K562 (cell line): ENCODE measurements at regions of chr21 and their contacts with region 1.

Region 1: DNA sequence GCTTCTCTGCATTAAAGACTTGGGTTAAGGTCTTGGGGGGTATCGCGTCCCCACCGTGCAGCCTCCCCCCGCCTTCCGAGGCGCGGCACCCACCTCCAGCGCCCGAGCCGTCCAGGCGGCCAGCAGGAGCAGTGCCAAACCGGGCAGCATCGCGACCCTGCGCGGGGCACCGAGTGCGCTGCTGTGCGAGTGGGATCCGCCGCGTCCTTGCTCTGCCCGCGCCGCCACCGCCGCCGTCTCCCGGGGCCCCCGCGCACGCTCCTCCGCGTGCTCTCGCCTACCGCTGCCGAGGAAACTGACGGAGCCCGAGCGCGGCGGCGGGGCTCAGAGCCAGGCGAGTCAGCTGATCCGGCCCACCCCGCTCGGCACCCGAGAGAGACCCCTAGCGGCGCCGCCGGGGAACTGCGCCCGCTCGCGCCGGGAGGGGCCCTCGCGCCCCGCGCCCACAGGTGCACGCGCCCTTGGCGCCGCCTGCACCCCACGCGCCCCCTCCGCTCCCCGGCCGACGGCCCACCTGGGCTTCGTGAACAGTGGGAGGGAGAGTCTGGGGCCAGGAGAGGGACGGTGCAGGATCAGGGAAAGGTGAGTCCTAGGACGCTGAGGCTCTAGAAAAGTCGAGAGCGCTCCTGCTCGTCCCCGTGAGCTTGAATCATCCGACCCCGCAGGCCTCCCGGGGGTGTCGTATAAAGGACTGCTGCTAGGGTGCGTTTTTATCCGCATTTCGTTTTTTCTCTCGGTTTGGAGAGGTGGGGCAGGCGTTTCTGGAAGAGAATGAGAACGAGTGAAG is at the start of gene APP:
- DNase-seq: peak; percentile 48 to 84 (median 80)
- ATAC-seq: peak; percentile 95
- H3K4me3 ChIP-seq: no peak within 1 kb of the TSS
- H3K27ac ChIP-seq: no peak within 1 kb of the TSS
- H3K4me1 ChIP-seq: peaks cover 0 to 16% of the 10 kb centered on the region in 2 experiments; a peak in 2 of 5 replicates
- H3K27me3 ChIP-seq: no peaks in the 10 kb centered on the region
- CTCF ChIP-seq: peak; percentile 44 to 64 (median 50)
- EP300 ChIP-seq: no peak
- POLR2A ChIP-seq: no peak
- RAD21 ChIP-seq: peak; percentile 33 to 40; a peak in 2 of 4 replicates
- polyA plus RNA-seq, gene APP: 0.01 TPM in 1 of 2 experiments, not detected in the other

Region 2: DNA sequence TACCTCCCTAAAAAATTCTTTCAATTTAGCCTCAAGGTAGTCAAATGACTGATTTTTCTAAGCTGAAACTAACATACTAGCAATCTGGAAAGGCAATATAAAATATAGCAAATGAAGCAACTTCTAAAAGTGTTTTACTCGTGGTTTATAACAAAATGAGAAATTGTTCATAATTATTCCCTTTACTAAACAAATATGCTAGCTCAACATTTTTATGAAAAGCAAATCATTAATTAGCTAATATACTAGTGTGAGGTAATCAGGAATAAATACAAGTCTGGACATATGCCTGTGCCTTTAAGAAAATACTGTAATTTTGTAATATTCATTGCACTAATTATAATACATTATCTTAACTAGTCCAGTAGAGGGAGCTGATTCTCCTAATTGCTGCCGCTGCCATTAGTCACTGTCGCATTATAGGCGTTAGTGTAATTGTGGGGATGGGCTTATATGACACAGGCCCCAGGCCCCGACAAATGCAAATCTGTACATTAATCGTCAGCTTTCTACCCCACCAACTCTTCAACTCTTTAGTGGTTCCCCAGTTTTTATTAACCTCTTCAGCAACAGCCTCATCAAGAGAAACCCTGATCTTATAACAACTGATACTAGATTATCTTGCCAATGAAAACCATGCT is 275.0 kb before region 1 on chr21:
- CTCF ChIA-PET with region 1: no interaction called
- POLR2A ChIA-PET with region 1: no interaction called
- in situ Hi-C with region 1: no loop called
- intact Hi-C with region 1: loop called (anchors 10 kb)
- DNase-seq: peak; percentile 15 to 37 (median 28)
- ATAC-seq: peak; percentile 80
- H3K4me3 ChIP-seq: no peak overlapping the region
- H3K27ac ChIP-seq: no peak overlapping the region
- H3K4me1 ChIP-seq: no peaks in the 10 kb centered on the region
- H3K27me3 ChIP-seq: no peaks in the 10 kb centered on the region
- CTCF ChIP-seq: peak; percentile 42 to 49 (median 44); a peak in 4 of 6 replicates
- EP300 ChIP-seq: no peak
- POLR2A ChIP-seq: no peak
- RAD21 ChIP-seq: peak in 1 of 2 experiments; percentile 47; a peak in 3 of 4 replicates